GM18951 (cell line): ENCODE measurements at regions of chr5 and their contacts with region 1.

Region 1: DNA sequence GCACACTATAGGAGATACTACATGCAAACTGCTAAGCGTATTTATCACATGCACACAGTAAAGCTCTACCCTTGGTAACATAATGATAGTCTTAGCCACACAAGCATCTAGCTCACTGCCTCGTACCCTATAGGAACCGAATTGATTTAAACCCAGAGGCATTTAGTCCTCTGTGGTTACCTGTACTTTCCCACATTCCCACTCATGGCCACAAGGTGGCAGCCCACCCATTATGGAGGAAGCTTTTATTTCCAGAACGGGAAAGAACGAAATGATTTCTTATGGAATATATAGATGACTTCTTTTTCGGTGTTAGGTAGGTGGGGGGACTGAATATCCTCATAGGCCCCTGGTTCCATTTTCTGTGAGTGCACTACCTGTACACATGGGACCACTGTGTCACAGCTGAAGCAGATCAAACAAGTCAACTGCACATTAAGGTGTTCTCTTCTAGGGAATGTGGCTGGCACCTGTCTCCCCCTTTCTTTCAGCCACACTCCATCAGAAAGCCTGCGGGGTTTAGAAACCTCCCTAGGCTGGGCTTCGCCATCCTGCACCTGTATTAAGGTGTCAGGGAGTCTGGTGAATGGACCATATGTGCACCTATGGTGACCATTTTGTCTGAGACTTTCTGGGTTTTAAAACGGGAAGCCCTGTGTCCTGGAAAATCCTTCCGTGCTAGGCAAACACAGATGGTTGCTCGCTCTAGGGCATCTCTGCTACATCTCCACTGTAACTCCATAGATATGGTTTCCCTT is 313.2 kb downstream of the SLIT3 start:
- POLR2A ChIP-seq: no peak

Region 2: DNA sequence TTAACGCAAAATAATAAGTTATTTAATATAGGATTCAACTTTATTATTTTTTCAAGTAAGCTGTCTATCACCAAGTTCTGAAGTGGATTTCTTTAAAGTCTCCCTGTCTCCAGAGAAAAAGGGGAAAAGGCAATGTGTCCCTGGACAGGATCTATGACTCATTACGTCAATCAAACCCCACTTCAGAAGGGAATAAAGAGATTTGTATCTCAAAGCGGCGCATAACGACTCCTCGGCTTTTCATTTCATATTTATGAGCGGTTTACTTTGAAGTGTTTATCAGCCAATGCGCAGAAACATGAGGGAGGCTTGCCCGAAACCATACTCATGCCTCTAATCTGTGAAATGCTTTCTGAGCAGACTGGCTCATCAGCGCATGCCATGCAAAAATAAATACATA is 1634.9 kb before region 1 on chr5:
- in situ Hi-C with region 1: no loop called
- POLR2A ChIP-seq: no peak

Region 3: GRCh38 chr5:168268949-168269943 is 718.5 kb before region 1 on chr5:
- in situ Hi-C with region 1: loop called (anchors 25 kb)
- POLR2A ChIP-seq: no peak

Region 4: DNA sequence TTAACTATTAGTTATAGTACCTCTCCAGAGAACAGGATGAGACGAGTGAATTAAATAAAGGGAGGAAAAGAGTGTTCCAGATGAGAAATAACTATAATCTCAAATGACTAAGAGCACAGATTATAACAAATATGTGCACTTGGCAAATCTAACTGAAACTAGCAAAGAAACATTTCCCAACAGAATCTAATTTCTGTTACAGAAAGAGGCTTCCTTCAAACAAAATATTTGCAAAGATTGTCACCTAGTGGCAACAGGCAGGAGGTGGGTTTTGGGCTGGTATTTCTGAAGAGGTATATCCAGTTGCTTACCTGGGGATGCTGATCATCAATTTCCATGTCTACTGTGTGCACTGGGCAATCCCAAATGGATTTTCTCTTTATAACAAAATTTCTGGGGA is 590.2 kb after region 1 on chr5:
- in situ Hi-C with region 1: loop called (anchors 10 kb)
- POLR2A ChIP-seq: no peak